GM18951 (cell line): ENCODE measurements at regions of chr20 and their contacts with region 1.

Region 1: GRCh38 chr20:24738981-24739633 is 210.0 kb upstream of the CST7 start:
- POLR2A ChIP-seq: no peak

Region 2: DNA sequence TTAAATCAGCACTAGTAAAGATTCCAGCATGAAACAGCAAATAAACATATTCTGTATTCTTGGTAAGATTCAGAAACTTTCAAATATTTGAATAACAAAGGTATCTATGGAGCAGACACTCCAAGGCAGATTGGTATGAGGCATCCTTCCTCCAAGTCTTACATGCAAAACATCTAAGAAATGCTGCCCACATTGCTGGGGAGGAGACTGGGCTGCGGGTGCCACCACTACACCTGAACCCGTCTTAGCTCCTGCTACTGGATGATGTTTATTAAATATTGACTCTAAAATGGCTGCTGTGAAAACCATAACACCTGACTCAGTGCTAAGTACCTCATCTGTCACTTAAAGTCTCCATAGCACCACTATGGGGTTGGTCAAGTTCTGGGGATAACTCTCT is 562.4 kb before region 1 on chr20:
- in situ Hi-C with region 1: loop called (anchors 10 kb)
- POLR2A ChIP-seq: no peak

Region 3: GRCh38 chr20:24560571-24561491 is 178.3 kb before region 1 on chr20:
- in situ Hi-C with region 1: no loop called
- POLR2A ChIP-seq: no peak

Region 4: DNA sequence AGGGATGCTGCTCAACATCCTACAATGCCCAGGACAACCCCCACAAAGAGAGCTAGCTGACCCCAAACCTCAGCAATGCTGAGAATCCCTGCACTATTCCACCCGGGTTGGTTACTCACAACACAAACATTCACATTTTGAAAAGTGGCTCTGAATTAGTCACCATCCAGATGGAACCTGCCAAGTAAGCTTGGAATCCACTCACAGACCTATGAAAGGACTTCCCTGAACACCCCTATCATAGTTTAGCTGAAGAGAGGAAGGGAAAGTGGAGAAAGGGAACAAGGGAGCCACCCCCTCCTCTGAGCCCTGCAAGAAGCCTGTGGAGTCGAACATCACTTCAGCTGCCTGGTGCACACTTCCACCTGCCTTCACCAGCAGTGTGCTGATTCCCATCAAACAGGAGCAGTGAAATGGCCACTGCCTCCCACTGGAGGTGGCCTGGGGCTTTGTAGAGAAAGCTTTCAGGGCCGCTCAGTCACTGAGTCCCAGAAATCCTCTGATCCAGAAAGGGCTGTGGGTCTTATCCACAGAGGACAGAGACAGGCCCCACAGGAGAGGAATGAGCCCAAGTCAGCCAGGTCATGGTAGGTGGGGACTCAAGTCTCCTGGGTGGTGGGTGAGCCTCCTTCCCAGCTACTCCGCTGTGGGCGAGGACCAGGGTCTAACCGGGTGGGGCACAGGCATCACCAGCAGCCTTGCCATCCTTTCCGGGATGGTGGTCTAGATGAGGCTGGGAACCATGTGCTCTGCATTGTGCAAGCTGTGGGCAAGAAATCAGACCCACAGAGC is 66.0 kb before region 1 on chr20:
- in situ Hi-C with region 1: no loop called
- POLR2A ChIP-seq: no peak